Natural killer cell (primary cell): ENCODE measurements at regions of chr1 and their contacts with region 1.

Region 1: GRCh38 chr1:210099921-210100320 is 132.7 kb upstream of the SERTAD4 start:
- DNase-seq: no peak
- ATAC-seq: no peak
- H3K4me3 ChIP-seq: no peak overlapping the region
- H3K4me3 Mint-ChIP-seq: no peak overlapping the region
- H3K27ac ChIP-seq: no peak overlapping the region
- H3K27ac Mint-ChIP-seq: no peak overlapping the region
- H3K4me1 ChIP-seq: no peaks in the 10 kb centered on the region
- H3K4me1 Mint-ChIP-seq: no peaks in the 10 kb centered on the region
- H3K27me3 ChIP-seq: no peaks in the 10 kb centered on the region
- H3K27me3 Mint-ChIP-seq: peaks cover 0 to 3% of the 10 kb centered on the region in 2 donors
- CTCF ChIP-seq: no peak

Region 2: DNA sequence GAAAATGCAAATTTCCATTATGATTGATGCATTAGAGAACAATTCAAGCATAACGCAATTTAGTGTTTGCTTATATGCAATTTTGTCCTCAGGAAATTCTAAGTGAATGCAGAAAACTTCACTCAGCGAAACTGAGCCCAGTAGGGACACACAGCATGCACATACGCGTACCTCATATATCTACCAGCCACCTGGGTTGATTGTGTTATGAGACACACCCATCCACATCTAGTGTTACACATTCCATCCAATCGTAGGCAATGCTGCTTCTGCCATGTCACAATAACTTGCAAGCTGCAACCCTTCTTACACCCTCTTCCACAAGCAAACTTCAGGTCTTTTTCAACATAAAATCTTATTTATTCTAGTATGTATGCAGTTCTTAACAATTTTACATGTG is 541.7 kb after region 1 on chr1:
- intact Hi-C with region 1: loop called (anchors 5 kb)
- DNase-seq: no peak
- ATAC-seq: no peak
- H3K4me3 ChIP-seq: no peak overlapping the region
- H3K4me3 Mint-ChIP-seq: no peak overlapping the region
- H3K27ac ChIP-seq: no peak overlapping the region
- H3K27ac Mint-ChIP-seq: no peak overlapping the region
- H3K4me1 ChIP-seq: no peaks in the 10 kb centered on the region
- H3K4me1 Mint-ChIP-seq: no peaks in the 10 kb centered on the region
- H3K27me3 ChIP-seq: no peaks in the 10 kb centered on the region
- H3K27me3 Mint-ChIP-seq: peaks cover 0 to 4% of the 10 kb centered on the region in 2 donors
- CTCF ChIP-seq: no peak